HEK293 (cell line): ENCODE measurements at regions of chr6 and their contacts with region 1.

Region 1: GRCh38 chr6:75893058-75893775 is 144.2 kb downstream of the MYO6 start:
- H3K4me3 ChIP-seq: no peak overlapping the region
- H3K27ac ChIP-seq: no peak overlapping the region
- H3K4me1 ChIP-seq: no peaks in the 10 kb centered on the region
- CTCF ChIP-seq: peak; percentile 39; the same call in 1 of the 2 replicates

Region 2: DNA sequence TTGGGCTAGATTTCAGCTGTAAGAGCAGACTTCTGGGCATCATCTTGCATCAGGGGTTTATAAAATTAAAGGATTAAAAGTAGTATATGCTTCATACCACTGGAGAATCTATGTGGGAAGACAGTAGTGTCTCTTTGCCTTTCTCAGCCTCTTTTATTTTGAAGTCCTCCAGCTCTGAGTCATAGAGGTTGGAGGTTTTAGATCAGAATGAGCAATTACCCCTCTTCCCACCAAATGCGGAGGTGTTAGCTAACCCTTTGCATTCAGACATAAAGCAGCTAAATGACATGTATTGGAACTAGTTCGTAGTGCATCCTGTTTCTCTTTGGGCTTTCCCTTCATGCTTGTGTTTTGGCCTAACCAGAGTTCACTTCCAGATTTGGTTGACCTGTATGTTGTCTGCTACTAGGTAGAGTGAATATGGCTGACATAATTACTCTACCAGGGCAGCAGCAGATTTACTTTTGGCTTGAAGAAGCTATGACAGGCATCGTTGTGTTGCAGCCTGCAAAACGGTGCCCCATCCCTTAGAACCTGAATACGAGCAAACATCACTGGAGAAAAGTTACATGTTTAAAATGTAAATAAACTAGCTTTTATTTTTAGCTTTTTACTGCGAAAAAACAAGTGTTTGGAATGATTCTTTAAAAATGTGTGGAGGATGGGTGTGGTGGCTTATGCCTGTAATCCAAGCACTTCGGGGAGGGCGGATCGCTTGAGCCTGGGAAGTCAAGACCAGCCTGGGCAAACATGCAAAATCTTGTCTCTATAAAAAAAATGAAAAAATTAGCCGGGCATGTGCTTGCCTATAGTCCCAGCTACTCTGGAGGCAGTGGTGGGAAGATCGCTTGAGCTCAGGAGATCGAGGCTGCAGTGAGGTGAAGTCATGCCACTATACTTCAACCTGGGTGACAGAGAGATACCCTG is 62.0 kb before region 1 on chr6:
- CTCF ChIA-PET with region 1: no interaction called
- POLR2A ChIA-PET with region 1: no interaction called
- H3K4me3 ChIP-seq: no peak overlapping the region
- H3K27ac ChIP-seq: no peak overlapping the region
- H3K4me1 ChIP-seq: no peaks in the 10 kb centered on the region
- CTCF ChIP-seq: no peak

Region 3: GRCh38 chr6:75855052-75855451 is 38.2 kb before region 1 on chr6:
- CTCF ChIA-PET with region 1: interaction called, 19 read pairs
- POLR2A ChIA-PET with region 1: no interaction called
- H3K4me3 ChIP-seq: no peak overlapping the region
- H3K27ac ChIP-seq: no peak overlapping the region
- H3K4me1 ChIP-seq: peaks cover 8% of the 10 kb centered on the region
- CTCF ChIP-seq: no peak

Region 4: DNA sequence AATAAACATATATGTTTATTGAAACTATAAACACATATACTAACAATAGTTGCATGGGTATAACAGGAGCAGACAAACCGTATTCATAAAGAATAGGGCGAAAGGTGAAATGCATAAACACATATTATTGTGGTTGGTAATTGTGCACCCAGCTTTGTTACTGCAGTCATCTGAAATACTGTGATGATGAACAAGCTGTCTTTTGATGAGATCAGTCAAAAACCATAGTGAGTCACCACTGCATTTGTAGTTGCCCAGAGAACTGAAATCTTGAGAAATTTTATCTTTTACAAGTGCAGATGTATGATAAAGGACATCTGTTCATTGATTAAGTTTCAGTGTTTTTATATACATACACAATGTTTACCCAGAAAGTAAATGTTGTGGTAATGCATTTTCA is 10.5 kb before region 1 on chr6:
- CTCF ChIA-PET with region 1: interaction called, 74 read pairs
- POLR2A ChIA-PET with region 1: interaction called, 4 read pairs
- H3K4me3 ChIP-seq: no peak overlapping the region
- H3K27ac ChIP-seq: no peak overlapping the region
- H3K4me1 ChIP-seq: 0 out of 2 replicates have a peak, but pooled peaks cover 6% of the 10 kb centered on the region
- CTCF ChIP-seq: no peak

Region 5: DNA sequence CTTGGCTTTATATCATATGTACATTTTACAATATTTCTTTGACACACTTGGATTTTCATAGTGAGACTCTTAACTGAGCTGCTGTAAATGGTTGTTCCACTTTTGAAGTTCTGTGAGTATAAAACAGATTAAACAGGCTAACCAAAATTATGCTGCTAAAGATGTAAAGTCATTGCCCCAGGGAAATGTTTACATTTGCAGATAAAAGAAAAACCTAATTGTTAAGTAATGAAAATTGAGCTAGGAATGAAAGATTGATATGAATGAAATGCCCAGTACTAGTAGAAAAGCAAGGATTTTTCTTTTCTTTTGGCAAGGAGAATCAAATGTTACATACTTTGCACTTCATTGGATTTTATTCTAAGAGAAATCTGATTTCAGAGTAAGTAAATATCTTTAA is 19.8 kb after region 1 on chr6:
- CTCF ChIA-PET with region 1: interaction called, 53 read pairs
- POLR2A ChIA-PET with region 1: no interaction called
- H3K4me3 ChIP-seq: no peak overlapping the region
- H3K27ac ChIP-seq: no peak overlapping the region
- H3K4me1 ChIP-seq: peaks cover 3% of the 10 kb centered on the region
- CTCF ChIP-seq: no peak

Region 6: DNA sequence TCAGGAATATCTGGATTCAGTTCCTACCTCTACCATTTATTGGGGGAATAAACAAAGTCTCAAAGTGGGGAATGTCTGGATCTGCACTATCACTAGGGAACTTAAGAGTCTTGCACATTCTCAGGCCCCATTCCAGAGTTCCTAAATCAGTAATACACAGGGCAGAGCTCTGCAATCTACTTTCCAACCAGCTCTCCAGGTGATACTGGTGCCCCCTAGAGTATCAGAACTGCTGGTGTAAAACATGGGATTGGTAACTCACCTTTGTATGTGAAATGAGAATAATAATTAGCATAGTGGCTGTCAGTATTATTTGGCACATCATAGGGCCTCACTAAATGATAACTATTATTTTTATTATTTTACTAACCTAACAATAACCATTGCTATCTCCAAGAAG is 458.1 kb after region 1 on chr6:
- CTCF ChIA-PET with region 1: interaction called, 11 read pairs
- POLR2A ChIA-PET with region 1: no interaction called
- H3K4me3 ChIP-seq: no peak overlapping the region
- H3K27ac ChIP-seq: no peak overlapping the region
- H3K4me1 ChIP-seq: no peaks in the 10 kb centered on the region
- CTCF ChIP-seq: no peak